WTC11 (cell line): ENCODE measurements at regions of chr14 and their contacts with region 1.

Region 1: DNA sequence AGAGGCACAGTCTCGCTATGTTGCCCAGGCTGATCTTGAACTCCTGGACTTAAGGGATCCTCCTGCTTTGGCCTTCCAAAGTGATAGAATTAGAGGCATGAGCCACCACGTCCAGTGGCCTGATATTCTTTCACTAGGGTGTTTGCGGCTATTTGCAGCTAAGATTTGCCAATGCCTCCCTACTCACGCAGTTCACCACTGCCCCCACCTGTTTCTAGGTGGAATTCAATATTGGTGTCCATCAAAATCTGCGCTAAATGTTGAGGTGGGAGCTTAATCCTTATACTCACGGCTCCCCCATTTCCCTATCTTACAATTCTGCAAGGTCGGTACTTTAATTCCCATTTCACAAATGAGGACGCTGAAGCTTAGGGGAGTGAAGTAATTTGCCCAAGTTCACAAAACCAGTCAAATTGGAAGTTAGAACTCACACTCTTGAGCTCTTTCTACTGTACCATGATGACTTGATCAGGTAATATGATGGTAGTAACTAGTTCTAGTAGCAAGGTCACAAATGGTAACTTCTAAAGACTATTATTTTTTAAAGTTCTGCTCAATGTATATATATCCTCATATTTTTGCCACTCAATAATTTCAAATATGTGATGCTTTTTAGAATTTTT is 22.1 kb upstream of the LRRC9 start:
- DNase-seq: peak; percentile 39
- ATAC-seq: peak; percentile 94
- H3K4me3 Mint-ChIP-seq: no peak overlapping the region
- H3K27ac Mint-ChIP-seq: no peak overlapping the region
- H3K4me1 Mint-ChIP-seq: no peaks in the 10 kb centered on the region
- H3K27me3 Mint-ChIP-seq: 0 out of 2 replicates have a peak, but pooled peaks cover 2% of the 10 kb centered on the region
- CTCF ChIP-seq: no peak

Region 2: GRCh38 chr14:59576332-59577294 is 321.3 kb before region 1 on chr14 and contains the start of gene CCDC175:
- CTCF ChIA-PET with region 1: interaction called, 24 read pairs
- POLR2A ChIA-PET with region 1: no interaction called
- DNase-seq: peak; percentile 95
- ATAC-seq: peak; percentile 98
- H3K4me3 Mint-ChIP-seq: peak within 1 kb of the TSS; percentile 79
- H3K27ac Mint-ChIP-seq: no peak within 1 kb of the TSS
- H3K4me1 Mint-ChIP-seq: no peaks in the 10 kb centered on the region
- H3K27me3 Mint-ChIP-seq: no peaks in the 10 kb centered on the region
- CTCF ChIP-seq: peak; percentile 87
- total RNA-seq, gene CCDC175: 0.16 to 0.27 TPM in 2 of 3 replicates, not detected in the other

Region 3: DNA sequence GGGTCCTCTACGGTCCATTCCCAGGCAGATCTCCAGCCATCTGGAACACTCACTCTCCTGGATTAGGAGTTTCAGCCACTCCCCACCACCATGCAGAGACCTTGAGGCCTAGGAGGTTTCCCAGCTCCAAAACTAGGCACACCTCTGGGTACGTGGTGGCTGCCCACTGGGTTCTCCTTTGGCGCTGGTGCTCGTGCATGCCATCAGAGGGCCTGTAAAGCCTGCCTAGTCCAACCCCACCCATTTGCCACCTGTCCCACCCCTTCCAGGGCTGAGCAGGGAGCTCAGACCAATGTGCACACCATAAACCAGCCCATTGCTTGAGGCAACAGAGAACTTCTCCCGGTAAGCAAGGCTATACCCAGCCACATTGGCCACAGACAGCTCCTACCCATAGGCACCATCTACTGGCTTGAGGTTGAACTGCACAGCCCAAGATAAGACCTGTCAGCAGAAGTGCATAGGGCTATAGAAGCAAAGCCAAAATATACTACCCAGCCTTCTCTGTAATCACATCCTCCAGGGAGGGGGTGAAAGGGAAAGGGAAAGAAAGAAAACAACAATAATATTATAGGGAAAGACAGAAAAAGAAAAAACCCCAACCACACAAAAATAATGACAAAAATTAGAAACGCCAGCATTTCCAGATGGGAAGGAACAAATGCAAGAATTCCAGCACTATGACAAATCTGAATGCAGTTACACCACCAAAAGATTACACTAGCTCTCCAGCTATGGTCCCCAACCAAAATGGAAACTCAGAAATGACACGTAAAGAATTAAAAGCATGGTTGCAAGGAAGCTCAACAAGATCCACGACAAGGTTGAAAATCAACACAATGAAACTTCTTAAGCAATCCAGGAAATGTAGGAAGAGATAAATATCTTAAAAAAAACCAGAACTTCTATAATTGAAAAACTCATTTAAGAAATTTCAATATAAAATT is 209.4 kb before region 1 on chr14:
- CTCF ChIA-PET with region 1: interaction called, 15 read pairs
- POLR2A ChIA-PET with region 1: no interaction called
- DNase-seq: peak; percentile 76
- ATAC-seq: peak; percentile 100
- H3K4me3 Mint-ChIP-seq: no peak overlapping the region
- H3K27ac Mint-ChIP-seq: no peak overlapping the region
- H3K4me1 Mint-ChIP-seq: peaks cover 3% of the 10 kb centered on the region
- H3K27me3 Mint-ChIP-seq: no peaks in the 10 kb centered on the region
- CTCF ChIP-seq: peak; percentile 68

Region 4: GRCh38 chr14:59870277-59871165 is 27.4 kb before region 1 on chr14 and contains the start of gene RTN1:
- CTCF ChIA-PET with region 1: interaction called, 17 read pairs
- POLR2A ChIA-PET with region 1: no interaction called
- DNase-seq: peak; percentile 71
- ATAC-seq: peak; percentile 86
- H3K4me3 Mint-ChIP-seq: peak within 1 kb of the TSS; percentile 90
- H3K27ac Mint-ChIP-seq: no peak within 1 kb of the TSS
- H3K4me1 Mint-ChIP-seq: peaks cover 11% of the 10 kb centered on the region
- H3K27me3 Mint-ChIP-seq: peaks cover 74% of the 10 kb centered on the region
- CTCF ChIP-seq: no peak
- total RNA-seq, gene RTN1: 1.1 to 2.8 TPM (median 1.5 TPM) in 3 replicates

Region 5: GRCh38 chr14:60184146-60184904 is 286.5 kb after region 1 on chr14:
- CTCF ChIA-PET with region 1: interaction called, 13 read pairs
- POLR2A ChIA-PET with region 1: no interaction called
- DNase-seq: no peak
- ATAC-seq: no peak
- H3K4me3 Mint-ChIP-seq: peak overlapping the region; percentile 44
- H3K27ac Mint-ChIP-seq: no peak overlapping the region
- H3K4me1 Mint-ChIP-seq: peaks cover 14% of the 10 kb centered on the region
- H3K27me3 Mint-ChIP-seq: no peaks in the 10 kb centered on the region
- CTCF ChIP-seq: peak; percentile 50